Aorta (tissue), 5 donors: ENCODE measurements at regions of chr1 and their contacts with region 1.

Region 1: GRCh38 chr1:75632350-75632949 is 21.5 kb upstream of the SLC44A5 start:
- DNase-seq: no peak
- ATAC-seq: peak; percentile 74
- H3K4me3 ChIP-seq: no peak overlapping the region
- H3K27ac ChIP-seq: no peak overlapping the region
- H3K4me1 ChIP-seq: no peaks in the 10 kb centered on the region
- H3K27me3 ChIP-seq: no peaks in the 10 kb centered on the region

Region 2: GRCh38 chr1:75265792-75266191 is 366.7 kb before region 1 on chr1:
- intact Hi-C with region 1: loop called (anchors 2 to 10 kb)
- DNase-seq: no peak
- ATAC-seq: no peak
- H3K4me3 ChIP-seq: no peak overlapping the region
- H3K27ac ChIP-seq: no peak overlapping the region
- H3K4me1 ChIP-seq: no peaks in the 10 kb centered on the region
- H3K27me3 ChIP-seq: no peaks in the 10 kb centered on the region